Activated T-helper 2 cell treated with anti-CD3 and anti-CD28 coated beads, Interferon-gamma antibody, Interleukin-2, Interleukin-4, amounts not matched to agents 10 μg/mL and 5 μg/mL and 100 μg/mL, durations not matched to agents 14 hours and 24 hours and 36 hours (primary cell): ENCODE measurements at regions of chr1 and their contacts with region 1.

Region 1: GRCh38 chr1:35539073-35539823 is 18.0 kb downstream of the KIAA0319L start:
- DNase-seq: peak; percentile 38
- H3K4me3 Mint-ChIP-seq: peak overlapping the region; percentile 62
- H3K27ac Mint-ChIP-seq: peak overlapping the region; percentile 85
- H3K4me1 Mint-ChIP-seq: peaks cover 44% of the 10 kb centered on the region
- H3K27me3 Mint-ChIP-seq: no peaks in the 10 kb centered on the region

Region 2: GRCh38 chr1:35557292-35558063 is 18.2 kb after region 1 on chr1 and contains the starts of genes KIAA0319L and NCDN:
- intact Hi-C with region 1: loop called (anchors 2 kb)
- DNase-seq: peak; percentile 95
- H3K4me3 Mint-ChIP-seq: peak within 1 kb of the TSS; percentile 96
- H3K27ac Mint-ChIP-seq: peak within 1 kb of the TSS; percentile 96
- H3K4me1 Mint-ChIP-seq: peaks cover 40% of the 10 kb centered on the region
- H3K27me3 Mint-ChIP-seq: no peaks in the 10 kb centered on the region
- total RNA-seq, gene KIAA0319L: 40.9 and 46.5 TPM in 2 replicates
- total RNA-seq, gene NCDN: 31.8 and 32.6 TPM in 2 replicates

Region 3: DNA sequence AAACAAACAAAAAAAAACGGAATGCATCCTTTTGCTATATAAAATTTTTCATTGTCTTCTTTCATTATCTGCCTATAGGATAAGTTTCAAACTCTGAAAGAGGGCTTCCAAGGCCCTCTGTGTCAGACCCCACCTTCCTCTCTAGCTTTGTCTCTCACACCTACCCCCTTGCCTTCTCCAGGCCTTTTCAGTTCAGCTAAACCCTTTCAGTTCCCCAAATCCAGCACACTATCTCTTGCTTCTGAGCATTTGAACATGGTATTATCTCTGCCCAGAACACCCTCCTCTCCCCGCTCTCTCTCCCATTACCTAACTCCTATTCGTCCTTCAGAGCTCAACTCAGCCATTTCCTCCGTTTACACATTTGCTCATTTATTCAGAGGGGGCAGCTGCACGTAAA is 143.8 kb after region 1 on chr1:
- intact Hi-C with region 1: no loop called
- DNase-seq: no peak
- H3K4me3 Mint-ChIP-seq: no peak overlapping the region
- H3K27ac Mint-ChIP-seq: no peak overlapping the region
- H3K4me1 Mint-ChIP-seq: no peaks in the 10 kb centered on the region
- H3K27me3 Mint-ChIP-seq: peaks cover 25% of the 10 kb centered on the region